ENCODE measurements at regions of chr19 and their contacts with region 1.

Region 1: DNA sequence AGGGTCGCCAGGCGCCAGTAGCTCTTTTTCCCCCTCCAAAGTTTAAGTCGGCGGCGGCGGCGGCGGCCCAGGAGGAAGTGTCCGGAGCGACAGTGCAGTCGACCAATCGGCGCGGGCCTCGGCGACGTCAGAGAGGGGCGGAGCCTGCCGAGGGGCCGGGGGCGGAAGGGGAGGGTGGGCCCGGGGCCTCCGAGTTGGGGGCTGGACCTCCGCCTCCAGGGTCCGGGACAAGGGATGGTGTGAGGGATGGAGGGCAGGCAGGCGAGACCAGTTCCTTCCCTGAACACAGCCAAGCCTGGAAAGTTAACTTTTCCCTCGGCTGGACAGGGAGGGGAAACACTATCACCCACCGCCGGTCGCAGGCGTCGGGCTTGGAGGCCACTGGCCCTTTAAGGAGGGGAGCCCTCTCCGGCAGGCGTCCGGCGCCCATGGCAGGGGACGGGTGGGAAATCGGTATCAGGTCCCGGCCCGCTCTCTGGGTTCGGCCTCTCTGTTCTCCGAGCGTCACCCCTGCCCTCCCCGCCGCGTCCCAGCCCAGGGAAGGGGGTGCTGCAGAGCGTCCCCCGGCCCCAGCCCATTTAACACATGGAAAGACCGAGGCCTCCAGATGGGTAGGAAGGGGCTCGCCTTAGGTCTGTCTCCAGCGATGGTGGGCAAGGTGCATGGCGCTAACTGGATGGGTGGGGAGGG is at the start of gene PRKD2:
- DNase-seq: peak; percentile 71 to 91 (median 81)
- ATAC-seq: peak; percentile 41 to 43
- H3K4me3 Mint-ChIP-seq: peak within 1 kb of the TSS; percentile 91 to 97 (median 94)
- H3K27ac Mint-ChIP-seq: peak within 1 kb of the TSS; percentile 96 to 99 (median 98)
- H3K4me1 Mint-ChIP-seq: peaks cover 26 to 71% (median 58%) of the 10 kb centered on the region in 4 donors
- H3K27me3 Mint-ChIP-seq: no peaks in the 10 kb centered on the region
- polyA plus RNA-seq, gene PRKD2: 28.6 to 79.7 (median 37.1) TPM

Region 2: GRCh38 chr19:46600384-46601317 is 116.5 kb before region 1 on chr19:
- POLR2A ChIA-PET with region 1: interaction called, 16 read pairs
- DNase-seq: peak; percentile 93 to 100 (median 98)
- ATAC-seq: peak; percentile 85
- H3K4me3 Mint-ChIP-seq: peak overlapping the region; percentile 95 to 100 (median 98)
- H3K27ac Mint-ChIP-seq: peak overlapping the region; percentile 100
- H3K4me1 Mint-ChIP-seq: peaks cover 22 to 60% (median 35%) of the 10 kb centered on the region in 4 donors
- H3K27me3 Mint-ChIP-seq: peaks cover 0 to 2% (median 0%) of the 10 kb centered on the region in 5 donors

Region 3: DNA sequence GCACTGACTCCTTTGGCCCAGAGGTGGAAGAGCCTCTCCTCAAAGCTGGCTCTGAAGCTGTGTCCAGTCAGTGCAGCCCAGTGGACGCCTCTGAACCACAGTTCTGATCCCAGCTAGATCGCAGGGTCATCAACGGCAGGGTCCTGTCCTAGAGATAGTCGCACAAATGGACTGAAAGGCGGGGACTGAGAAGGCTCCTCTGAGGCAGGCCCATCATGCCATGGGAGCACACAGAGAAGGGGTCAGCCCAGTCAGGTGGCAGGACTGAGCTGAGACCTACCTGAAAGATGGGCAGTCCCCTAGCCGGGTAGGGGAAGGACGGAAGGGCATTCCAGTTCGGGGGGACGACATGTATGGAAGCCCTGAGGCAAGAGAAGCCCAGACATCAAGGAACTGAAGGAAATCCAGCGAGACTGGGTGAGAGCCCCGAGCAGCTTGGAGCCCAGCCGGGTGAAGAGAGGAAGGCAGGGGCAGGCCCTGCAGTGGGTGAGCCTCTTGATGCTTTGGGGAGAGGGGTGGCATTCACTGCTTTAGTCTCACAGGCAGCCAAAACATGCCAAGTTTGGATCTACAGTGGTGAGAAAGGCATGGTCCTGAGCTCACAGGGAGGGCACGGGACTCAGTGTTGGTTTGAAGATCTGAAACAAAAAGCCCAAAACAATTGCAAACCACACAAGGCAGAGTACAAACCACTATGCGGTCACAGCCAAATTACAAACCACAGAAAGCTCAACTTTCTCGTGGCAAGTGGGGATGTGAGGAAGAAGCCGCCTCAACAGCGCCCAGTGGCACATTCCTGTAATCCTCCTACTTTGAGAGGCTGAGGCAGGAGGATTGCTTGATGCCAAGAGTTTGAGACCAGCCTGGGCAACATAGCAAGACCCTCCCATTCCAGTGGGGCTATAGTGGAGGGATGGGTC is 106.1 kb before region 1 on chr19:
- POLR2A ChIA-PET with region 1: interaction called, 11 read pairs
- DNase-seq: peak in 6 of 10 donors; percentile 30 to 56 (median 49)
- ATAC-seq: peak; percentile 56 to 64
- H3K4me3 Mint-ChIP-seq: peak overlapping the region; percentile 60 to 84 (median 76)
- H3K27ac Mint-ChIP-seq: peak overlapping the region; percentile 89 to 97 (median 94)
- H3K4me1 Mint-ChIP-seq: peaks cover 37 to 77% (median 66%) of the 10 kb centered on the region in 4 donors
- H3K27me3 Mint-ChIP-seq: no peaks in the 10 kb centered on the region

Region 4: GRCh38 chr19:46704379-46705076 is 12.7 kb before region 1 on chr19:
- POLR2A ChIA-PET with region 1: interaction called, 43 read pairs
- DNase-seq: peak; percentile 69 to 93 (median 86)
- ATAC-seq: peak; percentile 96 to 97
- H3K4me3 Mint-ChIP-seq: peak overlapping the region in 2 of 10 donors; percentile 2 to 8
- H3K27ac Mint-ChIP-seq: peak overlapping the region; percentile 37 to 94 (median 80)
- H3K4me1 Mint-ChIP-seq: peaks cover 7 to 23% (median 16%) of the 10 kb centered on the region in 4 donors
- H3K27me3 Mint-ChIP-seq: no peaks in the 10 kb centered on the region

Region 5: GRCh38 chr19:46728693-46729676 is 11.8 kb after region 1 on chr19:
- POLR2A ChIA-PET with region 1: interaction called, 52 read pairs
- DNase-seq: peak; percentile 64 to 93 (median 83)
- ATAC-seq: peak; percentile 94 to 95
- H3K4me3 Mint-ChIP-seq: peak overlapping the region in 8 of 10 donors; percentile 24 to 75 (median 47)
- H3K27ac Mint-ChIP-seq: peak overlapping the region in 7 of 10 donors; percentile 14 to 92 (median 26)
- H3K4me1 Mint-ChIP-seq: peaks cover 14 to 27% (median 22%) of the 10 kb centered on the region in 4 donors
- H3K27me3 Mint-ChIP-seq: no peaks in the 10 kb centered on the region

Measured in naive thymus-derived CD8-positive, alpha-beta T cell (primary cell).